ENCODE measurements at regions of chr16 and their contacts with region 1.

Region 1: GRCh38 chr16:10964039-10964890 is 19.9 kb downstream of the CLEC16A start:
- DNase-seq: peak; percentile 71
- H3K4me3 ChIP-seq: no peak overlapping the region
- H3K27ac ChIP-seq: no peak overlapping the region
- H3K4me1 ChIP-seq: no peaks in the 10 kb centered on the region
- H3K27me3 ChIP-seq: no peaks in the 10 kb centered on the region
- CTCF ChIP-seq: peak; percentile 92 to 96
- POLR2A ChIP-seq: no peak

Region 2: DNA sequence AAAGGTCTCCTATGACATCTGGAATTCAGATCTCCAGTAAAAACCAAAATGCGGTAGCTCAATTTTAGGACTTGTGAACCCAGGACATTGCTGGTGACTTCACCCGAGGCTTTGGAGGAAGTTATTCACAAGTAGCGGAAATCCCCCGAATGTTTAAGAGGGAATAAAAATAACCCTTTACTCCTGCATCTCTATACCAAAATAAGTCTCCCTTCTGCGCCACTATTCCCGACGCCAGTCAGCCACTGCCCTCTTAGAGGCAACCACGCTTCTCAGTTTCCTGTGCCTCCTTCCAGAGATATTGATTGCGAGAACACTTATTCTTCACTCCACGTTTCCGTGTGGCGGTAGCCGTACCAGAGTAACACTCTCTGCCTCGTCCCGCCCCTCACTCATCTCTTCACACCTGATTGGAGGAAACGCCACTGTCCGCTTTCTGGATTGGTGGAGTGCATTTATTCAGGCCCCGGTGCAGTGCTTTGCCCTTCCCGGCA is 411.2 kb before region 1 on chr16:
- CTCF ChIA-PET with region 1: no interaction called
- POLR2A ChIA-PET with region 1: no interaction called
- dilution Hi-C with region 1: no loop called
- intact Hi-C with region 1: no loop called
- DNase-seq: peak; percentile 13
- H3K4me3 ChIP-seq: no peak overlapping the region
- H3K27ac ChIP-seq: no peak overlapping the region
- H3K4me1 ChIP-seq: no peaks in the 10 kb centered on the region
- H3K27me3 ChIP-seq: no peaks in the 10 kb centered on the region
- CTCF ChIP-seq: no peak
- POLR2A ChIP-seq: no peak

Region 3: GRCh38 chr16:10839279-10839666 is 125.0 kb before region 1 on chr16:
- CTCF ChIA-PET with region 1: no interaction called
- POLR2A ChIA-PET with region 1: no interaction called
- dilution Hi-C with region 1: no loop called
- intact Hi-C with region 1: no loop called
- DNase-seq: no peak
- H3K4me3 ChIP-seq: no peak overlapping the region
- H3K27ac ChIP-seq: no peak overlapping the region
- H3K4me1 ChIP-seq: no peaks in the 10 kb centered on the region
- H3K27me3 ChIP-seq: no peaks in the 10 kb centered on the region
- CTCF ChIP-seq: no peak
- POLR2A ChIP-seq: no peak

Region 4: GRCh38 chr16:10949370-10949970 is 14.8 kb before region 1 on chr16:
- CTCF ChIA-PET with region 1: interaction called, 37 read pairs
- POLR2A ChIA-PET with region 1: no interaction called
- dilution Hi-C with region 1: no loop called
- intact Hi-C with region 1: loop called (anchors 1 kb)
- DNase-seq: no peak
- H3K4me3 ChIP-seq: no peak overlapping the region
- H3K27ac ChIP-seq: no peak overlapping the region
- H3K4me1 ChIP-seq: peaks cover 15% of the 10 kb centered on the region
- H3K27me3 ChIP-seq: no peaks in the 10 kb centered on the region
- CTCF ChIP-seq: no peak
- POLR2A ChIP-seq: no peak

Region 5: DNA sequence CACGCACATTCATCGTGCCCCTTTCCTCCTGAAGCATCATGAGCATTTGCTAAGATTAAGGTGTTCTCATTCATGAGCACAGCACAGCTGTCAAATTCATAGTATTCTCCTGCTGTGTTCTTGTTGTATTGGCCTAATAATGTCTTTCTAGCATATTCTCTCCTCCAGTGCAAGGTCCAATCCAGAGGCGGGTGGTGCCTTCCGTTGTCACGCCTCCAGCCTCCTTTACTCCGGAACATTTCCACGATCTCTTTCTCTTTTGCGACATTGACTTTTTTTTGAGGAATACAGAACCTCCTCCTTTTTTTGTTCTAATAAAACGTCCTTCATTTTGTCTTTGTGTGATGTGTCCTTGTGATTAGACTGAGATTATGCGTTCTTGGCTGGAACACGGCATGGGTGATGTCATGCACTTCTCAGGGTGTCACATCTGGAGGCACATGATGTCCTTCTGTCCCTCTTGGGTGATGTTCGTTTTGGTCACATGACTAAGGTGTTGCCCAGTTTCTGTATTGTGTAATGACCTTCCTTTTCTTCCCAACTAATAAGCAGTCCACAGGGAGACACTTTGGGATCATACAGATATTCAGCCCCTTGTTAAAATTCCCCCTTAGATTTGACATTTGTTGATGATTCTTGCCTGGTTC is 46.4 kb after region 1 on chr16:
- CTCF ChIA-PET with region 1: no interaction called
- POLR2A ChIA-PET with region 1: no interaction called
- dilution Hi-C with region 1: no loop called
- intact Hi-C with region 1: no loop called
- DNase-seq: no peak
- H3K4me3 ChIP-seq: no peak overlapping the region
- H3K27ac ChIP-seq: no peak overlapping the region
- H3K4me1 ChIP-seq: no peaks in the 10 kb centered on the region
- H3K27me3 ChIP-seq: no peaks in the 10 kb centered on the region
- CTCF ChIP-seq: no peak
- POLR2A ChIP-seq: no peak

Region 6: DNA sequence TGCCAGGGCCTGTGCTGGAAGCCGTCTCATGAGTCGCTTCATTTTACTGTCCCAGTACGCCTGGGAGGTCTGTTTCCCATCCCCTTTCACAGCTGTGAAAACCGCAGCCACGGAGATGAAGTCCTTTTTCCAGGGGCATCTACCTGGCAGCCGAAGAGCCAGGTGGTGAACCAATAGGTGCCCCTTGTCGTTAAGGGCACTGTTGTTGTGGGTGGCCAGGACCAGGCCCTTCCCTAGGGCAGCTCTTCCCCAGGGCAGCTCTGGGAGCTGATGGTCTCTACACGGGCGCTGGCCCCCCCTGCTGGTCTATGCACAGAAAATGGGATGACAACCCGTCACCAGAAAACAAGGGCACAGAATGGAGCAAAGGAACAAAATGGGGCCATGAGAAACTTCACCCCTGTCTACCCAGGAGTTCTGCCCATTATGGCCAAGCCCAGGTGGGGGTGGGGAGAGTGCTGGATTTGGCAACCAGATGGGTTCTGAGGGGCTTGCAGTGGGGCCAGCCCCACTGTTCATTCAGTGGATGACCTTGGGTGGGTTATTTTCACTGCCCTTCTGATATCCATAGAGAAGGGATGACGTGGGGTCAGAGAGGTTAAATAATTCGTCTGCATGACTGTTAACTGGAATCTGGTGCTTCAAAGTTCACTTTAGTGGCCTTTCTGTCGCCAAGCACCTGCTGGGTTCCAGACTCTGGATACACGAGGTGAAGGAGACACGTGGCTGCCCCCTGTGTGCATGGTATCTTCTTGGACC is 392.5 kb after region 1 on chr16:
- CTCF ChIA-PET with region 1: interaction called, 70 read pairs
- POLR2A ChIA-PET with region 1: no interaction called
- dilution Hi-C with region 1: no loop called
- intact Hi-C with region 1: loop called (anchors 1 kb)
- DNase-seq: peak; percentile 51
- H3K4me3 ChIP-seq: no peak overlapping the region
- H3K27ac ChIP-seq: no peak overlapping the region
- H3K4me1 ChIP-seq: peaks cover 9% of the 10 kb centered on the region
- H3K27me3 ChIP-seq: peaks cover 0 to 4% of the 10 kb centered on the region in 2 experiments
- CTCF ChIP-seq: peak; percentile 65 to 83
- POLR2A ChIP-seq: no peak

Region 7: GRCh38 chr16:11370084-11370931 is 406.0 kb after region 1 on chr16:
- CTCF ChIA-PET with region 1: interaction called, 11 read pairs
- POLR2A ChIA-PET with region 1: no interaction called
- dilution Hi-C with region 1: no loop called
- intact Hi-C with region 1: no loop called
- DNase-seq: no peak
- H3K4me3 ChIP-seq: no peak overlapping the region
- H3K27ac ChIP-seq: no peak overlapping the region
- H3K4me1 ChIP-seq: no peaks in the 10 kb centered on the region
- H3K27me3 ChIP-seq: no peaks in the 10 kb centered on the region
- CTCF ChIP-seq: no peak
- POLR2A ChIP-seq: no peak

Region 8: GRCh38 chr16:11386791-11387546 is 422.7 kb after region 1 on chr16:
- CTCF ChIA-PET with region 1: interaction called, 10 read pairs
- POLR2A ChIA-PET with region 1: no interaction called
- dilution Hi-C with region 1: no loop called
- intact Hi-C with region 1: no loop called
- DNase-seq: peak; percentile 13
- H3K4me3 ChIP-seq: no peak overlapping the region
- H3K27ac ChIP-seq: no peak overlapping the region
- H3K4me1 ChIP-seq: no peaks in the 10 kb centered on the region
- H3K27me3 ChIP-seq: no peaks in the 10 kb centered on the region
- CTCF ChIP-seq: peak; percentile 47 to 70
- POLR2A ChIP-seq: no peak

Region 9: DNA sequence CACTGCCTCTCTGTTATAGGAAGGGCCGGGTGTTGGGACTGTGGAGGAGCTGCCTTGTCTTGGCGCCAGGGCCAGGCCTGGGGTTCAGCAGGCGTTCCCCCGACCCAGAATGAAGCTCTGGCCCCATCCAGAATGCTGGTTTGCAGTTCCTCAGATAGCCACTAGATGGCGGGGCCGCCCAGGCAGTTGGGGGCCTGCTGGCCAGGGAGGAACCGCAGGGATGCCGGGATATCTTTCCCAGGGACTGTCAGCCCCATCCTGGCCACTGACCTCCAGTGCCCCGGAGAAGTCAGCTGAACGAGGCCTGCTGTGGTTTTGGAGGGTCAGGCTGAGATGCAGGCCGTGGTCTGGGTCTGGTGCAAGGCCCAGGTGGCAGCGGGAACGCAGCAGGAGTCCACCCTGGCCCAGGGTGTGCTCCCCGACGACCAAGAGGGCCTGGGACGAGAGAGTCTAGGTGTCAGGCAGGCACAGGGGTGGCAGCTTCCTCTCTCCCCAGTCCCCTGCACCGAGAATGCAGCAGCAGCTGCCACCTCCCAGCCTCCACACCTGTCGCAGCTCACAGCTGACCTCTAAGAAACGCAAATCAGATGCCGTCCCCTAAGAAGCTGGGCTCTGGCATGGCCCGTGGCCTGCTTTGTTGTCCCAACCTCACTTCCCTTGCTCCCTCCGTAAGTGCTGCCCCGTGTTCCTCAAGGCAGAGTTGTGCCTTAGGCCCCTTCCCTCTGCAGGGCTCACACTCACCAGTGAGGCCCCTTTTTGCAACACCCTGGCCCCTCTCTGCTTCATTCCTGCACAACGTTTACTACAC is 432.2 kb after region 1 on chr16:
- CTCF ChIA-PET with region 1: interaction called, 16 read pairs
- POLR2A ChIA-PET with region 1: no interaction called
- dilution Hi-C with region 1: no loop called
- intact Hi-C with region 1: no loop called
- DNase-seq: peak; percentile 39
- H3K4me3 ChIP-seq: no peak overlapping the region
- H3K27ac ChIP-seq: no peak overlapping the region
- H3K4me1 ChIP-seq: no peaks in the 10 kb centered on the region
- H3K27me3 ChIP-seq: no peaks in the 10 kb centered on the region
- CTCF ChIP-seq: peak; percentile 95 to 96
- POLR2A ChIP-seq: no peak